ENCODE measurements at regions of chr3 and their contacts with region 1.

Region 1: DNA sequence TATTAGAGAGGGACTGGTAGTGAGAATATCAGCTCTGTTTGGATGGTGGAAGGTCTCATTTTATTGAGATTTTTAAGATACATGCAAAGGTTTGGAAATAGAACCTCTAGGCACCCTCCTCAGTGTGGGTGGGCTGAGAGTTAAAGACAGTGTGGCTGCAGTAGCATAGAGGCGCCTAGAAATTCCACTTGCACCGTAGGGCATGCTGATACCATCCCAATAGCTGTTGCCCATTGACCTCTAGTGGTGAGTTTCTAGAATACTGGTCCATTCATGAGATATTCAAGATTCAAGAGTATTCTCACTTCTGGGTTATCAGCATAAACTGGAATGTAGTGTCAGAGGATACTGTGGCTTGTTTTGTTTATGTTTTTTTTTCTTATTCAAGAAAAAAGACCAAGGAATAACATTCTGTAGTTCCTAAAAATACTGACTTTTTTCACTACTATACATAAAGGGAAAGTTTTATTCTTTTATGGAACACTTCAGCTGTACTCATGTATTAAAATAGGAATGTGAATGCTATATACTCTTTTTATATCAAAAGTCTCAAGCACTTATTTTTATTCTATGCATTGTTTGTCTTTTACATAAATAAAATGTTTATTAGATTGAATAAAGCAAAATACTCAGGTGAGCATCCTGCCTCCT is 87.2 kb downstream of the TGFBR2 start:
- DNase-seq: peak; percentile 55
- H3K4me3 ChIP-seq: no peak overlapping the region; a peak in 1 of 4 replicates
- H3K27ac ChIP-seq: no peak overlapping the region; a peak in 1 of 4 replicates
- H3K4me1 ChIP-seq: peaks cover 27 to 32% of the 10 kb centered on the region in 2 experiments
- H3K27me3 ChIP-seq: no peaks in the 10 kb centered on the region
- CTCF ChIP-seq: peak; percentile 89
- EP300 ChIP-seq: no peak
- RAD21 ChIP-seq: peak; percentile 100

Region 2: DNA sequence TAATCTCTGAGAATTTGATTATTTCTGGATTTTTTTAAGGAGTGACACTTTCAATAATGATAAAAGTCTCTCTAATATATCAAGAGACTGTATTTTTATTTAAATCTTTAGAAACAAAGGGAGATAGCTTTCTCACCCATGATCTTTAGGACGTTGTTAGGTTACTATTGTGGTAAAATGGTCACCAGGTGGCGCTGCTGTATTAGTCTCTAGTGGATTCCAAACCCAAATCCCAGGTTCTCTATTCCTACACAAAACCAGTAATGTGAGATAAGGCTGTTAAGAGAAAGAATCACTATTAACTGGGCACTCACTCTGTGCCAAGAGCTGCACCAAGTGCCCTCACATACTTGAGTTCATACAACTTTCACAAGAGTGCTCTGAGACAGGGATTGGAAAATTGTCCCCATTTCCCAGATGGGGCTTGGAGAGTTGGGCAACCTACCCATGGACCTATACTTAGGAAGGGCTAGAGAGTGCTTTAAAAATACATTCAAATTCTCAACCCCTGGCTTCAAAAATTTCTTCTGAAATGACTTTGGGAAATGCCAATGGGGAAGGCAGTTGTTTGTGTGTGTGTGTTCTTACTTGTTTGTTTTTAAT is 680.6 kb before region 1 on chr3:
- CTCF ChIA-PET with region 1: interaction called, 12 read pairs
- POLR2A ChIA-PET with region 1: no interaction called
- DNase-seq: peak; percentile 41
- H3K4me3 ChIP-seq: no peak overlapping the region; a peak in 1 of 4 replicates
- H3K27ac ChIP-seq: no peak overlapping the region
- H3K4me1 ChIP-seq: peaks cover 0 to 2% of the 10 kb centered on the region in 2 experiments; a peak in 2 of 4 replicates
- H3K27me3 ChIP-seq: no peaks in the 10 kb centered on the region
- CTCF ChIP-seq: peak; percentile 80
- EP300 ChIP-seq: no peak
- RAD21 ChIP-seq: peak; percentile 73

Region 3: DNA sequence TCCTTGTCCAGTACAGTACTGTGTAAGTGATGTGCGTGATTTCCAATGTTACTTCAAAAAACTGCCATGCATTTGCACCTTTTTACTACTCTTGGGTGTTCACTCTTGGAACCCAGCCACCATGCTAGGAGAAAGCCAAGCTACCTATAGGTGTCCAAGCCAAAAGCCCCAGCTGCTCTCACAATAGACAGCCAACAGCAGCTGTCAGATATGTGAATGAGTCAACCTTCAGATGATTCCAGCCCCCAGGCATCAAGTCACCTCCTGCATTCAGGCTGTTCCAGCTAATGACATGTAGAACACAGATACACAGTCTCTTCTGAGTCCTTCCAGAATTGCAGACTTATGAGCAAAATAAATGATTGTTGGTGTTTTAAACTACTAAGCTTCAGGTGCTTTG is 504.9 kb before region 1 on chr3:
- CTCF ChIA-PET with region 1: interaction called, 14 read pairs
- POLR2A ChIA-PET with region 1: no interaction called
- DNase-seq: no peak
- H3K4me3 ChIP-seq: no peak overlapping the region
- H3K27ac ChIP-seq: peak overlapping the region in 1 of 2 experiments; percentile 11; a peak in 1 of 4 replicates
- H3K4me1 ChIP-seq: peaks cover 10 to 21% of the 10 kb centered on the region in 2 experiments; a peak in 3 of 4 replicates
- H3K27me3 ChIP-seq: no peaks in the 10 kb centered on the region
- CTCF ChIP-seq: no peak
- EP300 ChIP-seq: peak in 1 of 2 experiments; percentile 61; a peak in 3 of 4 replicates
- RAD21 ChIP-seq: no peak

Region 4: GRCh38 chr3:30319713-30320112 is 373.9 kb before region 1 on chr3:
- CTCF ChIA-PET with region 1: interaction called, 12 read pairs
- POLR2A ChIA-PET with region 1: no interaction called
- DNase-seq: peak; percentile 8
- H3K4me3 ChIP-seq: no peak overlapping the region
- H3K27ac ChIP-seq: no peak overlapping the region; a peak in 1 of 4 replicates
- H3K4me1 ChIP-seq: peaks cover 2 to 7% of the 10 kb centered on the region in 2 experiments; a peak in 2 of 4 replicates
- H3K27me3 ChIP-seq: no peaks in the 10 kb centered on the region
- CTCF ChIP-seq: peak; percentile 59
- EP300 ChIP-seq: no peak
- RAD21 ChIP-seq: peak; percentile 66

Region 5: DNA sequence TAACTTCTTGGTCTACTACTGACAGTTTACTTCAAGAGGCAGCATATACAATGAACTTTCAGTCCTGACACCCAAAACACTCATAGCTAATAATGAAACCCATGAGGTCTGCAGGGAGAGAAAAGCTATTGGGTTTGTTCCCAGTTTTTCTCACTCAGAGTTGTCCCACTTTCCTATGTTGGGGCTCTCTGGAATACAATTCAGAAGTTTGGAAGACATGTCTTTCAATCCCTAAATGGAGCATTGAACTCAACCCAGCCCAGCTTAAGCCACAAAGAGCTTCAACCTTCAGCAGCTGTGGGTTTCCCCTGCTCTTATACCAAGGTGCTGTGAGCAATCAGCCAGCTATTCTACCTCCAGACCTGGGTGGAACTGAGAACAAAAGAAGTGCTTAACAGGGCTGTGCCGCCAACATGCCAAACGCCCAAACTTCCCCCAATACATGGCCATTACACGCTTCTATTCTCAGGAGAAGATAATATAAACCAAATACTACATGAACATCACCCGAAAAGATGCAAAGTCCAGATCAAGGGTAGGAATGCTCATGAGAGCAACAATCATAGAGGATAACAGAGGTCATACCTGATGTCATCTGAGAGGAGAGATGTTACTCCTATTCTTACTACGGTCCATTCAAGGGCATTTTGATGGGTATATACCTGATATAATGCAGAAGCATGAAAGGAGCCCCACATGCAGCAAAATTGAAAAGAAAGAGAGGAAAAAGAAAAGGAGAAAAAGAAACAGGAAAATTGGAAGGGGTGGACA is 218.4 kb before region 1 on chr3:
- CTCF ChIA-PET with region 1: no interaction called
- POLR2A ChIA-PET with region 1: no interaction called
- DNase-seq: no peak
- H3K4me3 ChIP-seq: no peak overlapping the region
- H3K27ac ChIP-seq: no peak overlapping the region
- H3K4me1 ChIP-seq: peaks cover 0 to 8% of the 10 kb centered on the region in 2 experiments; a peak in 3 of 4 replicates
- H3K27me3 ChIP-seq: no peaks in the 10 kb centered on the region
- CTCF ChIP-seq: no peak
- EP300 ChIP-seq: no peak
- RAD21 ChIP-seq: no peak

Region 6: DNA sequence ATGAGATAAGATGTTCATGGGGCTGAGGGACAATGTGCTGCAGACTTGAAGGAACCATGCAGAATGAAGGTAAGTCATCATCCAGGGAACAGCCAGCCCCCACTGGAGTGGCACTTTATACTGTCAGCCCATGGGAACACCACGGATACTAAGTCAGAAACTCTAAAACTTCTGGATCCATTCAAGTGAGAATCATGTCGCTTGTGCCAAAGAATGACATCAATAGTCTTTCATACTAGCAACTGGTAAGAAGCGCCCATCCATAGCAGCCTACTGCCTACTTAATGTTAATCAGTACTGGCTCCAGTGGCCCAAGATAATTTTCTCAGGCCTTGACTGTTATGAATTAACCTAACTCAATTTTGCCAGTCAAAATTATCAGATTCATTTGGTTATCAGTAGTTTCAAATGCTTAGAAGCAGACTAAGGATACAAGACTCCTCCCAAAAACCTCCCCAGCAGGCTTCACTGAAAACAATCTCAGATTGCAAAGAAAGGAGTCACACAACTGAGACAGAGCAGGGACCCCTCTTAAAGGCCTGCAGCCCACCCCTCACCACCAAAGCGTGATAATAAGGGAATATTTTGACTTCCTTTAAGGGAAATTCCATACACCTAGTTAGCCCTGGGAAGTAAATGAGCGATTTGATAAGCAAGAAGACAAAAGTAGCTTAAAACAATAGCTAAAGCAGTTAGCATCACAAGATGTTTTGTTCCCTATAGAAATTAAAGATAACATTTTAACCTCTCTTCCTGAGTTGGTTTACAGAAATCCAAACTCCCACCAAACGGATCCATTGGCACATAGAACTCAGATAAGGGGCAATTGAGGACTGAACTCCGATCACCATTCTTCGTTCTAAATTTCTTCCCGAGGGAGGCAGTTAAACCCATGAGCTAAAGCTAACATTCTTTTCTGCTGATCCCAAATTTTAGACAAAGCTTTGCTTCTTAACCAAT is 11.6 kb after region 1 on chr3:
- CTCF ChIA-PET with region 1: interaction called, 18 read pairs
- POLR2A ChIA-PET with region 1: no interaction called
- DNase-seq: no peak
- H3K4me3 ChIP-seq: no peak overlapping the region
- H3K27ac ChIP-seq: no peak overlapping the region
- H3K4me1 ChIP-seq: peaks cover 0 to 5% of the 10 kb centered on the region in 2 experiments; a peak in 1 of 4 replicates
- H3K27me3 ChIP-seq: no peaks in the 10 kb centered on the region
- CTCF ChIP-seq: no peak
- EP300 ChIP-seq: peak in 1 of 2 experiments; percentile 29; a peak in 1 of 4 replicates
- RAD21 ChIP-seq: no peak

Region 7: DNA sequence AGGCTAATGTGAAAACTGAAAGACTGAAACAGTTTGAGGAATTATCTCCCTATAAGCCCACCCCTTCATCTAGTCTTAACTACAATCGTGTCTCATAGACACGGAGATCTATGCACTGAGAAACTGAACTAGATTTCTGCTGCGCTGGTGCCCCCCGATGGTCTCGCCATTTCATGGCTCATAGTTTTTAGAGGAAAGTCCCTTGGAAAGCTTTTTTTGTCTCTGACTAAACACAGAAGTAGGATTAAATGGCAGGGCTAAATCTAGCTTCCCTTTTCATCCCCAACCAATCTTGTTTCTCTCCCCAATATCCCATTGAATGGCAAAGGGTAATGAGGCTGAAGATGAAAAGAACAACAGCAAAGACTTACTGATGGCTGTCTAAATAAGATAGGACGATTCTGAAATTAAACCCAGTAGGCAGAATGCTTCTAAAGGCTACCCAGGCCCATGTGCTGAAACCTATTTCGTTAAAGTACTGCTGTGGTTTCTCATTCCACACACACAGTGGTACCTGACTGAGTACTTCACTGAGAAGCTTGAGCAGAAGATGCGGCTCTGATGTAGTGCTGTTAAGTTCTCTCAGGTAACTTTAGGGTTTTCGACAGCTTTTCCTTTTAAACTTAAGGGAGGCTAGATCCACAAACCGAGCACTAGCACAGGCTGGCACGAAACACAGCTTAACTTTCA is 58.2 kb after region 1 on chr3:
- CTCF ChIA-PET with region 1: interaction called, 14 read pairs
- POLR2A ChIA-PET with region 1: no interaction called
- DNase-seq: peak; percentile 24
- H3K4me3 ChIP-seq: no peak overlapping the region
- H3K27ac ChIP-seq: no peak overlapping the region
- H3K4me1 ChIP-seq: peaks cover 0 to 29% of the 10 kb centered on the region in 2 experiments; a peak in 2 of 4 replicates
- H3K27me3 ChIP-seq: no peaks in the 10 kb centered on the region
- CTCF ChIP-seq: peak; percentile 69
- EP300 ChIP-seq: no peak
- RAD21 ChIP-seq: peak; percentile 84

Measured in SK-N-SH (cell line).